ENCODE measurements at regions of chr14 and their contacts with region 1.

Region 1: GRCh38 chr14:21768116-21768874 is 94.7 kb upstream of the OR4E1 start:
- DNase-seq: peak; percentile 24
- H3K4me3 ChIP-seq: no peak overlapping the region
- H3K27ac ChIP-seq: no peak overlapping the region
- H3K4me1 ChIP-seq: peaks cover 10% of the 10 kb centered on the region
- H3K27me3 ChIP-seq: no peaks in the 10 kb centered on the region
- CTCF ChIP-seq: peak; percentile 56 to 65

Region 2: DNA sequence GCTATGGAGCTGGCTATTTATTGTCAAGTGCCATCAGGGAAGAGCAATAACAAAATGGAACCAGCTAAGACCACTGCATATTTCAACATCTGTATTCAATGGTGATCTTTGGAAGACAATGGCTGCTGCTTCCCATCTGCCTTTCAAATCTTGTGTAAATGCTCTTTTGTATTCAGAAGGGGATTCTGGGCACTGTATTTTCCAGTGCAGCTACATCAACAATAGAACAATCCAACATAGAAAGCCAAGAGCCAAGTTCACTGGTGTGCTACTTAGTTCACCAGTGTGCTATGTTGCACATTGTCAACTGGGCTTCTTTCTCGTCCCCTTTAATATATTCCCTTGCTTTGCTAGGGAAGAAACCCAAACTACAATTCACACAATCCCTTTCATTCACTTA is 34.1 kb after region 1 on chr14:
- CTCF ChIA-PET with region 1: no interaction called
- dilution Hi-C with region 1: loop called (anchors 5 kb)
- in situ Hi-C with region 1: no loop called
- intact Hi-C with region 1: no loop called
- DNase-seq: no peak
- H3K4me3 ChIP-seq: no peak overlapping the region
- H3K27ac ChIP-seq: no peak overlapping the region
- H3K4me1 ChIP-seq: no peaks in the 10 kb centered on the region
- H3K27me3 ChIP-seq: no peaks in the 10 kb centered on the region
- CTCF ChIP-seq: no peak

Region 3: DNA sequence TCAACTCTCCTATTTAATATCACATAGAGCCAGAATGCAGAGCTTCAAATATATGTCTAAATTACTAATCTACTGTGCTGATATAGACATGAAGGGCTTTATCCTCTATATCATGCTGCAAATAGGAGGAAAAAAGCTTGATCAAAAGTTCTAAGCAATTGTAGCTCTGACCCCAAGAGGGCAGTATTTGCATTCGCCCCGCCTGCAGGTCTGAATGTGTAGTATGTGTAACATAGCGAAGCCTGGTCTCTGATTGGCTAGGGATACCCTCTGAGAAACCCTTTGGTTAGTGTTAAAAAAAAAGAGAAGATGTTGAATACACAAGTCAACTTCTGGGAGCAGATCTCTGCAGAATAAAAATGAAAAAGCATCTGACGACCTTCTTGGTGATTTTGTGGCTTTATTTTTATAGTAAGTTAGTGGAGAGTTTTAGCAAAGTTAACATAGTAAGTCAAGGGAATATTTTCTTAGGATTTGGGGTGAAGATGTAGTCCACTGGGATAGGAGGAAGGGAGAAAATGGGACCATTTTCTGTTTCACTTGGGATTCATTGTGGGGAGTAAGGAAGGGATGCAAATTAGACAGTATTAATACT is 57.0 kb after region 1 on chr14:
- CTCF ChIA-PET with region 1: no interaction called
- dilution Hi-C with region 1: no loop called
- in situ Hi-C with region 1: no loop called
- intact Hi-C with region 1: loop called (anchors 5 kb)
- DNase-seq: peak; percentile 25
- H3K4me3 ChIP-seq: no peak overlapping the region
- H3K27ac ChIP-seq: no peak overlapping the region
- H3K4me1 ChIP-seq: peaks cover 11% of the 10 kb centered on the region
- H3K27me3 ChIP-seq: peaks cover 9% of the 10 kb centered on the region
- CTCF ChIP-seq: peak; percentile 69 to 84

Measured in mammary epithelial cell (primary cell).